ENCODE measurements at regions of chr7 and their contacts with region 1.

Region 1: GRCh38 chr7:104983578-104984539 is 30.1 kb upstream of the KMT2E start:
- DNase-seq: no peak
- H3K4me3 ChIP-seq: peak overlapping the region; percentile 50
- CTCF ChIP-seq: peak; percentile 48

Region 2: GRCh38 chr7:104878577-104878976 is 105.3 kb before region 1 on chr7:
- in situ Hi-C with region 1: no loop called
- DNase-seq: no peak
- H3K4me3 ChIP-seq: no peak overlapping the region
- CTCF ChIP-seq: no peak

Region 3: DNA sequence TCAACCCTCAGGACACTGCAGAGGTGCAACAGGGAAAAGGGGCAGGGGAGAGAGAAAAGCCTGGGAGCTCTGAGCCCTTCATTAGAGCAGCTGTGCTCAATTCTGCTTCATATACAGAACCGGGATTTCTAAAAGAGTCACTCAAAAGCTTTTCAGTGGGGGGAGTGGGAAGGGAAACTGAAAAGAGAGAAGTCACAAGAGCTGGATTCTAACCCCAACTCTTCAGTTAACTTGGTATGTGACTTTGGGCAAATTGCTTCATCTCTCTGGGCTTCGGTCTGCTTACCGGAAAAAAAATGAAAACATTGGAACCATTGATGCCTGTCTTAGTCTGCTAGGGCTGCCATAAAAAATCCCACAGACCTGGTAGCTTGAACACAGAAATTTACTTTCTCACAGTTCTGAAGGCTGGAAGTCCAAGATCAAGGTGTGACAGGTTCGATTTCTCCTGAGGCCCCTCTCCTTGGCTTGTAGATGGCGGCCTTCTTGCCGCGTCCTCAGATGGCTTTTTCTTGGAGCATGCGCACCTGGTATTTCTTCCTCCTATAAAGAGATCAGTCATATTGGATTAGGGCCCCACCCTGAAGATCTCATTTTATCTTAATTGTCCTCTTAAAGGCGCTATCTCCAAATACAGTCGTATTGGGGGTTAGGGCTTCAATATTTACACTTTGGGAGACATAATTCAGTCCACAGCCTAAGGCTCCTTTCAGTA is 88.2 kb before region 1 on chr7:
- in situ Hi-C with region 1: no loop called
- DNase-seq: no peak
- H3K4me3 ChIP-seq: no peak overlapping the region
- CTCF ChIP-seq: no peak

Region 4: GRCh38 chr7:104946338-104946737 is 37.5 kb before region 1 on chr7:
- in situ Hi-C with region 1: loop called (anchors 5 kb)
- DNase-seq: no peak
- H3K4me3 ChIP-seq: no peak overlapping the region
- CTCF ChIP-seq: no peak

Region 5: GRCh38 chr7:105014693-105015389 is 31.0 kb after region 1 on chr7:
- in situ Hi-C with region 1: loop called (anchors 5 kb)
- DNase-seq: no peak
- H3K4me3 ChIP-seq: peak overlapping the region; percentile 96
- CTCF ChIP-seq: no peak